Activated CD4-positive, alpha-beta T cell treated with anti-CD3 and anti-CD28 coated beads for 36 hours (primary cell): ENCODE measurements at regions of chr6 and their contacts with region 1.

Region 1: GRCh38 chr6:29763491-29764289 is 40.5 kb downstream of the HLA-F start:
- DNase-seq: peak; percentile 65
- ATAC-seq: peak; percentile 94
- H3K4me3 Mint-ChIP-seq: no peak overlapping the region
- H3K27ac Mint-ChIP-seq: peak overlapping the region; percentile 1
- H3K4me1 Mint-ChIP-seq: peaks cover 11% of the 10 kb centered on the region
- H3K27me3 Mint-ChIP-seq: peaks cover 9% of the 10 kb centered on the region

Region 2: GRCh38 chr6:29992807-29993206 is 229.1 kb after region 1 on chr6:
- CTCF ChIA-PET with region 1: no interaction called
- POLR2A ChIA-PET with region 1: no interaction called
- intact Hi-C with region 1: loop called (anchors 1 to 2 kb)
- DNase-seq: no peak
- ATAC-seq: peak; percentile 79
- H3K4me3 Mint-ChIP-seq: no peak overlapping the region
- H3K27ac Mint-ChIP-seq: no peak overlapping the region
- H3K4me1 Mint-ChIP-seq: no peaks in the 10 kb centered on the region
- H3K27me3 Mint-ChIP-seq: peaks cover 8% of the 10 kb centered on the region